Heart left ventricle (tissue), 16 donors: ENCODE measurements at regions of chr11 and their contacts with region 1.

Region 1: DNA sequence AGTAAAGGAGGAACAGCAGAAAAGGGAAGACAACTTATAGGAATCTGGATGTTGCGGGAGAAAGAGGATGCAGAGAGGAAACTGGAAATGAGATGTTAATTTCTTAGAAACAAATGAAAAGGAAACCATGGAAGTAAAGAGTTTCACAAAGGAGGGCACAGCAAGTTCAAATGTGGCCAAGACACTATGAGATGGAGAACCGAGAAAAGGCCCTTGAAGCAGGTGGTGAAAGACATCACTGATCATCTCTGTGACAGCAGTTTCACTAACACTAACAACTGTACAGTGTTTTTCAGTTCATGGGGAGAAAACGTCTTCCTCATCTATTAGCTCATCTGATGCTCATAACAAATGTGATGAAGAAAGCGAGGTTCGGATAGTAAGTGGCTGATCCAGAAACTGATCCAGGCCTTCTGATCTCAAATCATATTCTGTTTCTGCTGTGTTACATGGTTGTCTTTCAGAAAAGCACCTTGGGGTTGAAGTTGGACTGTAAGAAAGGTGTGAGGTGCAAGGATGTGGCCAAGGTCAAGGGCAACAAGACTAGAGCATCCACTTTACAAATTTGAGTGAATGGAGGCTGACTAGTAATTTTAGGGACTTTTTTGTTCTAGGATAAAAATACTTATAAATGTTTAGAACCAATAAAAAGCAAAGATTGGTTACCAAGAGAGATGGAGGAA is 492.1 kb upstream of the CADM1 start:
- DNase-seq: no peak
- ATAC-seq: no peak
- H3K4me3 ChIP-seq: no peak overlapping the region
- H3K27ac ChIP-seq: no peak overlapping the region
- H3K4me1 ChIP-seq: peaks cover 0 to 8% (median 0%) of the 10 kb centered on the region in 12 donors
- H3K27me3 ChIP-seq: no peaks in the 10 kb centered on the region
- CTCF ChIP-seq: no peak
- POLR2A ChIP-seq: no peak

Region 2: GRCh38 chr11:115566180-115566764 is 430.0 kb before region 1 on chr11:
- intact Hi-C with region 1: no loop called
- DNase-seq: peak in 1 of 5 donors; percentile 24
- ATAC-seq: peak; percentile 38 to 57 (median 46)
- H3K4me3 ChIP-seq: peak overlapping the region in 1 of 12 donors; percentile 1
- H3K27ac ChIP-seq: no peak overlapping the region
- H3K4me1 ChIP-seq: peaks cover 0 to 8% (median 0%) of the 10 kb centered on the region in 12 donors
- H3K27me3 ChIP-seq: no peaks in the 10 kb centered on the region
- CTCF ChIP-seq: no peak
- POLR2A ChIP-seq: no peak

Region 3: GRCh38 chr11:115579156-115579825 is 417.0 kb before region 1 on chr11:
- intact Hi-C with region 1: no loop called
- DNase-seq: no peak
- ATAC-seq: no peak
- H3K4me3 ChIP-seq: no peak overlapping the region
- H3K27ac ChIP-seq: no peak overlapping the region
- H3K4me1 ChIP-seq: peaks cover 0 to 15% (median 6%) of the 10 kb centered on the region in 12 donors
- H3K27me3 ChIP-seq: no peaks in the 10 kb centered on the region
- CTCF ChIP-seq: no peak
- POLR2A ChIP-seq: no peak

Region 4: DNA sequence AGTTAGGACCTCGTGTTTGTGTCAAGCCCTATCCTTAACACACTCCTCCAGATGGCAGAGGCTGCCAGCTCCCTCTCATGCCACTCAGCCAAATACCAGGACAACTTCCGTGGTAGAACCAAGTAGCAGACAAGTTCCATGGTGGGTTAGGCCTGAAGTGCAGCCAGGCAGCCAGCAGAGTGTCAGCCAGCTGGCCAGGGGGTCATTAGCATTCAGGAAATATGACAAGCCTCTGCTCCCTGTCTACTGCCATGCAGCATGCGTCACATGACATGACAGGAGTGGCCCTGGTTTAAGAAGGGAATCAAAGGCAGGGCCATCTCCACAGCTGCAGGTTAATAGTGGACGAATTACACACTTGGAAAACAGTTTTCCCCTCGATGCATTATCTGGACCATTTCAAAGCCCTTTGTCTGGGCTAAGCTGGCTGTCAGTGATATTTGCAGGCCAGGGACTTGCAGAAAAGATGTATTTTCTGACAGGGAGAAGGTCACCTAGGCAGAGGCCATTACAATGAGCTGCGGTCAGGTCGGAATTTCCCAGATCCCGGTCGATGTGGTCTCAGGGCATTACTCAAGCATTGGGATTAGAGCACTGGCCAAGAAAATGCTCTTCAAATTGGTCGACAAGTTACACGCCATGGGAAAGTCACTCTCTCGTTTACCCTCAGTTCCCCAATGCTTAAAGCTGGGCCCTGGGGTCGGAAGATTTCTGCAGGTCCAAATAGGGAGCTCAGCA is 30.3 kb before region 1 on chr11:
- intact Hi-C with region 1: no loop called
- DNase-seq: peak in 2 of 5 donors; percentile 51 to 65
- ATAC-seq: peak; percentile 51 to 88 (median 80)
- H3K4me3 ChIP-seq: no peak overlapping the region
- H3K27ac ChIP-seq: no peak overlapping the region
- H3K4me1 ChIP-seq: peaks cover 0 to 35% (median 9%) of the 10 kb centered on the region in 12 donors
- H3K27me3 ChIP-seq: no peaks in the 10 kb centered on the region
- CTCF ChIP-seq: no peak
- POLR2A ChIP-seq: no peak

Region 5: DNA sequence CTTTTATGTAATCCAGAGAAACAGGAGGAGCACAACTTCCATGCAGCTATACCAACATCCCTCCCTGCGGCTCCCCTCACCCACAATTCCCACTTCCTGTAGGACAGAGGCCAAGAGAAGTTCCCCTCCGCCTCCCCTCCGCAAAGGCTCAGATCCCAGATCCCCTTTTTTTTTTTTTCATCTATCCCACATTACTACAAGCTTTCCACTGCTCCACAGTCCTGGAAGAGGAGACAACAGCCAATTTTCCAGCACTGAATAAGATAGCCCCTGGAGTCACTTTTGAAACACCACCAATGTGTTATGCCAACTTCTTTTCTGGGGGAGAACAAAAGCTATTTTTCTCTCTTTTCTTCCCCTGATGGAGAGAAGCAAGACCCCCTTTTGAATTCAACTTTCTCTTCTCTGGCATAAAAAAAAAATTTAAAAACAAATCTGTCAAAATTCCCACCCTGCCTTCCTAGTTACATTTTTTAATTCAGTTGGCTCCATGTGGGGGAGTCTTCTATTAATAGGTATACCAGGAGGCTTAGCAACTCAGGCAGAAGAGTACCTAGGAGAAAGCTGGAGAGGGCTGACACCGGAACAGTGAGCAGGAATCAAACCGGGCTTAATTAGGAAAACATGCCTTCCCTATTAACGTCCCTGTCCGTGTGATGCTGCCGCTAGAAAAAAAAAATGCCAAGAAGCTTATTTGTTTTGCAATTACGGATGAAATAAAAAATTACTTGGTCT is 233.1 kb after region 1 on chr11:
- intact Hi-C with region 1: loop called in 5 of 10 experiments (anchors 2 to 10 kb)
- DNase-seq: no peak
- ATAC-seq: no peak
- H3K4me3 ChIP-seq: no peak overlapping the region
- H3K27ac ChIP-seq: no peak overlapping the region
- H3K4me1 ChIP-seq: peaks cover 0 to 39% (median 1%) of the 10 kb centered on the region in 12 donors
- H3K27me3 ChIP-seq: peaks cover 0 to 9% (median 0%) of the 10 kb centered on the region in 9 donors
- CTCF ChIP-seq: no peak
- POLR2A ChIP-seq: no peak